ENCODE measurements at regions of chr12 and their contacts with region 1.

Region 1: GRCh38 chr12:49366652-49367380 is 446 bp upstream of the SPATS2 start:
- DNase-seq: peak; percentile 93 to 100
- H3K4me3 ChIP-seq: peak overlapping the region; percentile 88
- H3K4me3 Mint-ChIP-seq: peak overlapping the region; percentile 75
- H3K27ac Mint-ChIP-seq: peak overlapping the region; percentile 38
- H3K4me1 ChIP-seq: peaks cover 17% of the 10 kb centered on the region
- H3K4me1 Mint-ChIP-seq: no peaks in the 10 kb centered on the region
- H3K27me3 ChIP-seq: no peaks in the 10 kb centered on the region
- H3K27me3 Mint-ChIP-seq: no peaks in the 10 kb centered on the region
- CTCF ChIP-seq: peak in 1 of 2 experiments; percentile 30

Region 2: DNA sequence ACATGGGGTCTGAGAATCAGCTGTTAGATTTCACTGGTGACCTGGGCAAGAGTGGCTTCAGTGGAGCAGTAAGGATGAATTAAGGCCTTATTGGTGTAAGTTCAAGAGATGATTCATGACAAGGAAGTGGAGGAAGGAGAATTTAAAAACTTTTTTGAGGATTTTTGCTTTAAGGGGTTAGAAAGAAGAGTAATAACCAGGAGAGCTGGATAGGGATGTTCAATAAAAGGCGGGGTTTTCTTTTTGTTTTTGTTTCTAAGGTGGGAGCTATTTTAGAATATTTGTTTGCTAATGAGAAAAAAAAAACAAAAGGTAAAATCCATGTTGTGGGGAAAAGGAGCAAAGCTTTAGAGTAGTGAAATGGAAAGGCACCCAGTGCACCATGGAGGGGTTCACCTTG is 220.4 kb before region 1 on chr12:
- CTCF ChIA-PET with region 1: no interaction called
- POLR2A ChIA-PET with region 1: no interaction called
- intact Hi-C with region 1: no loop called
- DNase-seq: no peak
- H3K4me3 ChIP-seq: no peak overlapping the region
- H3K4me3 Mint-ChIP-seq: no peak overlapping the region
- H3K27ac Mint-ChIP-seq: no peak overlapping the region
- H3K4me1 ChIP-seq: no peaks in the 10 kb centered on the region
- H3K4me1 Mint-ChIP-seq: no peaks in the 10 kb centered on the region
- H3K27me3 ChIP-seq: no peaks in the 10 kb centered on the region
- H3K27me3 Mint-ChIP-seq: no peaks in the 10 kb centered on the region
- CTCF ChIP-seq: no peak

Region 3: GRCh38 chr12:49304161-49304560 is 62.7 kb before region 1 on chr12:
- CTCF ChIA-PET with region 1: no interaction called
- POLR2A ChIA-PET with region 1: no interaction called
- intact Hi-C with region 1: no loop called
- DNase-seq: no peak
- H3K4me3 ChIP-seq: no peak overlapping the region
- H3K4me3 Mint-ChIP-seq: no peak overlapping the region
- H3K27ac Mint-ChIP-seq: no peak overlapping the region
- H3K4me1 ChIP-seq: 0 out of 2 replicates have a peak, but pooled peaks cover 5% of the 10 kb centered on the region
- H3K4me1 Mint-ChIP-seq: peaks cover 18% of the 10 kb centered on the region
- H3K27me3 ChIP-seq: no peaks in the 10 kb centered on the region
- H3K27me3 Mint-ChIP-seq: peaks cover 10% of the 10 kb centered on the region
- CTCF ChIP-seq: no peak

Region 4: GRCh38 chr12:49331380-49332222 is 35.2 kb before region 1 on chr12:
- CTCF ChIA-PET with region 1: interaction called, 20 read pairs
- POLR2A ChIA-PET with region 1: interaction called, 8 read pairs
- intact Hi-C with region 1: no loop called
- DNase-seq: peak; percentile 84 to 86
- H3K4me3 ChIP-seq: no peak overlapping the region
- H3K4me3 Mint-ChIP-seq: peak overlapping the region; percentile 18
- H3K27ac Mint-ChIP-seq: peak overlapping the region; percentile 77
- H3K4me1 ChIP-seq: peaks cover 24% of the 10 kb centered on the region
- H3K4me1 Mint-ChIP-seq: peaks cover 24% of the 10 kb centered on the region
- H3K27me3 ChIP-seq: no peaks in the 10 kb centered on the region
- H3K27me3 Mint-ChIP-seq: no peaks in the 10 kb centered on the region
- CTCF ChIP-seq: peak; percentile 90 to 96

Region 5: DNA sequence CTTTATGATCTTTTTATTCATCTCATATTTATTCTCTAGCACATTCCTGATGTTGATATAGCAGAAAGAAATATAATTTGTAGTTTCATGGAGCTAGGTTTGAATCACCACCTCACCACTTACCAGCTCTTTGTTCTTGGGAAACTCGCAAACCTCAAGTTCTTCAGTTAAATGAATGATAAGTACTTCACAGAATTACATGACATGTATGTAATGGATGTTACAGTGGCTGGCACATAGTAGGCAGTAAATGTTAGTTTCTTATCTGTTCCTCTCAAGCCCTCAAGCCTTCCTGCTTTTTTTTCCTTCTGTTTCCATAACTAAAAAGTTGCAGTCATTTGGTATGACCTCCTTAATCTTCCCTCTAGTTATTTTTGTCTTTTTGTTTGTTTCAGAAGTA is 55.3 kb after region 1 on chr12:
- CTCF ChIA-PET with region 1: interaction called, 11 read pairs
- POLR2A ChIA-PET with region 1: interaction called, 24 read pairs
- intact Hi-C with region 1: loop called (anchors 2 kb)
- DNase-seq: no peak
- H3K4me3 ChIP-seq: no peak overlapping the region
- H3K4me3 Mint-ChIP-seq: no peak overlapping the region
- H3K27ac Mint-ChIP-seq: peak overlapping the region; percentile 40
- H3K4me1 ChIP-seq: peaks cover 49% of the 10 kb centered on the region
- H3K4me1 Mint-ChIP-seq: peaks cover 36% of the 10 kb centered on the region
- H3K27me3 ChIP-seq: no peaks in the 10 kb centered on the region
- H3K27me3 Mint-ChIP-seq: no peaks in the 10 kb centered on the region
- CTCF ChIP-seq: no peak

Region 6: GRCh38 chr12:49515266-49515665 is 148.4 kb after region 1 on chr12:
- CTCF ChIA-PET with region 1: interaction called, 33 read pairs
- POLR2A ChIA-PET with region 1: interaction called, 4 read pairs
- intact Hi-C with region 1: no loop called
- DNase-seq: no peak
- H3K4me3 ChIP-seq: no peak overlapping the region
- H3K4me3 Mint-ChIP-seq: no peak overlapping the region
- H3K27ac Mint-ChIP-seq: no peak overlapping the region
- H3K4me1 ChIP-seq: no peaks in the 10 kb centered on the region
- H3K4me1 Mint-ChIP-seq: no peaks in the 10 kb centered on the region
- H3K27me3 ChIP-seq: no peaks in the 10 kb centered on the region
- H3K27me3 Mint-ChIP-seq: no peaks in the 10 kb centered on the region
- CTCF ChIP-seq: no peak

Region 7: GRCh38 chr12:49604856-49605255 is 238.0 kb after region 1 on chr12:
- CTCF ChIA-PET with region 1: no interaction called
- POLR2A ChIA-PET with region 1: no interaction called
- intact Hi-C with region 1: no loop called
- DNase-seq: no peak
- H3K4me3 ChIP-seq: no peak overlapping the region
- H3K4me3 Mint-ChIP-seq: no peak overlapping the region
- H3K27ac Mint-ChIP-seq: no peak overlapping the region
- H3K4me1 ChIP-seq: 0 out of 2 replicates have a peak, but pooled peaks cover 10% of the 10 kb centered on the region
- H3K4me1 Mint-ChIP-seq: no peaks in the 10 kb centered on the region
- H3K27me3 ChIP-seq: no peaks in the 10 kb centered on the region
- H3K27me3 Mint-ChIP-seq: no peaks in the 10 kb centered on the region
- CTCF ChIP-seq: no peak

Measured in Caco-2 (cell line).